Gastrocnemius medialis (tissue), 4 donors: ENCODE measurements at regions of chr17 and their contacts with region 1.

Region 1: DNA sequence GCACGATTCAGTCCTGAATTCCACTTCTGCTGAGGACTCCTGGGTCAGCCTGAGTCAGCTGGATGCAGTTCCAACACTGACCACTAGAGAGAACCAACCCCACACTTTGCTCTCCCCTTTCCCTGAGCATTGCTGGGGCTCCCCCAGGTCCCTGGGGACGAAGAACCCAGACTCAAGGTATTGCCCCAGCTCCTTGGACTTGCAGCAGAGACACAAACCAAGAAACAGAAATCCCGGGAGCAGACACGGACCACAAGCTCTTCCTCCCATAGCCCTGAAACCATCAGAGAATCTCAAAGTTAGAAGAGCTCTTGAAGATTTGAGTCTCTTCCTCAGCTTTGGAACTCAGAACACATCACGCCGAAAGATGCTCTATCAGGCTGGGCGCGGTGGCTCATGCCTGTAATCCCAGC is 678 bp upstream of the GH1 start:
- DNase-seq: peak in 1 of 2 donors; percentile 61
- ATAC-seq: peak; percentile 87 to 93
- H3K4me3 ChIP-seq: no peak overlapping the region
- H3K27ac ChIP-seq: no peak overlapping the region
- H3K4me1 ChIP-seq: peaks cover 3 to 4% of the 10 kb centered on the region in 2 donors
- H3K27me3 ChIP-seq: no peaks in the 10 kb centered on the region
- CTCF ChIP-seq: peak; percentile 90 to 99 (median 97)
- POLR2A ChIP-seq: no peak

Region 2: DNA sequence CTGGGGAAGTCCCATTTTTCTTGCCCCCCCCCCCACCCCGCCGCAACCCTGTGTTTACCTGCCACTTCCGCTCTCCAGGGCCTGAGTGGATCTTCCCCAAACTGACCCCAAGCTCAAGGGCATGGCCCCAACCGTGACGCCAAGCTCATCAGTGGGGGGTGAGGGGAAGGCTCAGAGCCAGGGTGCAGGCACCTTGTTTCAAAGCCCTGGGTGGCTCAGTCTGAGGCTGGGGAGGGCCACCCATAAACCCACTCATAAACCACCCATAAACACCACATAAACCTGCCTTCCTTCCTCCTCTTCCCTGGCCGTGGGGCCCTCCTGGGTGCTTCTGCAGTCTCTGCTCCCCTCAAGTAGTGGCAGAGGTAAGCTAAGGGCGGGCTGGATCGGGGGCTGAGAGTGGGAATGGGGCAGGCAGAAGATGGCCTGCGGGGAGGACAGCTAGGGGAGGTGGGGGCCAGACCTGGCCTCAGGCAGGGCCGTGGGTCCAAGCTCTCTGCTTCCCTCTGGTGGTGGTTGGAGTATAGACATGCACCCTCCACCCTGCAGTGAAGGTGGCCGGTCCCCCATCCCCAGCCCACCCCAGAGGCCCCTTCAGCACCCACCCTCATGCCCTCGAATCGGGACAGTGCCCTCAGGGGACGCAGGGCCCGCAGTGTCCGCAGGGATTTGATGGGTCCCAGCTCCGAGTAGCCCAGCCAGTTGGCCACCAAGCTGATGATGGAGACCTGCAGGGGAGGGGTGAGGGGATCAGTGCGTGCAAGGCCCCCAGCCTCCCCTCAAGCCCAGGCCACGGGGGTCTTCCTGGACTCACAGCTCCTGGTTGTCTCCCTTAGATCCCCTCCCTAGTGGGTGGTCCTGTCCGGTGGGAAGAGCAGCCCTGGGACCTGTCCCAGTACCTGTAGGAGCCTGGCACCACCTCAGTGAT is 27.4 kb after region 1 on chr17:
- in situ Hi-C with region 1: no loop called
- intact Hi-C with region 1: loop called (anchors 2 kb)
- DNase-seq: no peak
- ATAC-seq: peak; percentile 34 to 47
- H3K4me3 ChIP-seq: no peak overlapping the region
- H3K27ac ChIP-seq: peak overlapping the region; percentile 78 to 99 (median 88)
- H3K4me1 ChIP-seq: peaks cover 45 to 49% of the 10 kb centered on the region in 2 donors
- H3K27me3 ChIP-seq: no peaks in the 10 kb centered on the region
- CTCF ChIP-seq: peak; percentile 60 to 84 (median 79)
- POLR2A ChIP-seq: no peak

Region 3: DNA sequence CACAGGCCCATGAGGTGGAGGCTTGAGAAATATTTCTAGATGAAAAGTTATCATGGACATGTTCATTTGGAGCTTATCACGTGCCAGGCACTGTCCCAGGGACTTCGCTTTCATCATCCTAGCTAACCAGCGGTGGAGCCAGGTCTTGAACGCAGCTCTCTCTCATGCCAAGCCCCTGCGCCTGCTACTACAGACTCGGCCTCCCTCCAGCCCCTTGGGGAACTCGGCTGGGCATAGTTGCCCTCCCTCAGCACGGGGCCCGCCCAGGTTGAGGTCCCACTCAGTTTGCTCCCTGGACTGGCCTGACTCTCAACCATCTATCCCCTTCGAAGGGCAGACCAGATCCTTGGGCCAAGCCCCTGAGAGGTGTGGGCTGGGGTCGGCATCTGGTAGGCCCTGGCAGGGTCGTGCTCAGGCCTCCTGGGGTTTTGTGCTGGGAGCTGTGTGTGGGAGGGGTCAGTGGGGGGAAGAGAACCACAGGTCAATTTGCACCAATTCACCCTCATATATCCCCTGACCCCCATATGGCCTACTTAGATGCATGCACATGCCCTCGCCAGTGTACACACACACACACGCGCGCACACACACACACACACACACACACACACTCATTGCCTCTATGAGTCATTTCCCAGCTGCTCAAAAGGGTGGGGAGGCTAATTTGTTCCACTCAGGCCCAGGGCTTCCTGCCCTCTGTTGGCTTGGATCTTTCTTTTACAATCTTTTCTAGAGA is 65.5 kb after region 1 on chr17:
- in situ Hi-C with region 1: no loop called
- intact Hi-C with region 1: loop called (anchors 1 kb)
- DNase-seq: peak; percentile 84 to 94
- ATAC-seq: peak; percentile 54 to 55
- H3K4me3 ChIP-seq: peak overlapping the region in 2 of 4 donors; percentile 4 to 23
- H3K27ac ChIP-seq: peak overlapping the region; percentile 98 to 100 (median 99)
- H3K4me1 ChIP-seq: peaks cover 75 to 76% of the 10 kb centered on the region in 2 donors
- H3K27me3 ChIP-seq: no peaks in the 10 kb centered on the region
- CTCF ChIP-seq: peak in 1 of 5 experiments; percentile 3
- POLR2A ChIP-seq: peak; percentile 36 to 44

Region 4: GRCh38 chr17:64025732-64026294 is 106.5 kb after region 1 on chr17:
- in situ Hi-C with region 1: loop called in 3 of 4 experiments (anchors 5 to 10 kb)
- intact Hi-C with region 1: no loop called
- DNase-seq: peak; percentile 46 to 72
- ATAC-seq: peak; percentile 65 to 74
- H3K4me3 ChIP-seq: peak overlapping the region; percentile 0 to 33 (median 18)
- H3K27ac ChIP-seq: peak overlapping the region in 3 of 4 donors; percentile 50 to 82 (median 66)
- H3K4me1 ChIP-seq: peaks cover 9 to 11% of the 10 kb centered on the region in 2 donors
- H3K27me3 ChIP-seq: no peaks in the 10 kb centered on the region
- CTCF ChIP-seq: peak; percentile 84 to 98 (median 95)
- POLR2A ChIP-seq: no peak

Region 5: GRCh38 chr17:64081802-64082799 is 162.8 kb after region 1 on chr17:
- in situ Hi-C with region 1: no loop called
- intact Hi-C with region 1: no loop called
- DNase-seq: no peak
- ATAC-seq: peak in 1 of 2 donors; percentile 54
- H3K4me3 ChIP-seq: no peak overlapping the region
- H3K27ac ChIP-seq: no peak overlapping the region
- H3K4me1 ChIP-seq: peaks cover 11 to 15% of the 10 kb centered on the region in 2 donors
- H3K27me3 ChIP-seq: no peaks in the 10 kb centered on the region
- CTCF ChIP-seq: no peak
- POLR2A ChIP-seq: no peak

Region 6: DNA sequence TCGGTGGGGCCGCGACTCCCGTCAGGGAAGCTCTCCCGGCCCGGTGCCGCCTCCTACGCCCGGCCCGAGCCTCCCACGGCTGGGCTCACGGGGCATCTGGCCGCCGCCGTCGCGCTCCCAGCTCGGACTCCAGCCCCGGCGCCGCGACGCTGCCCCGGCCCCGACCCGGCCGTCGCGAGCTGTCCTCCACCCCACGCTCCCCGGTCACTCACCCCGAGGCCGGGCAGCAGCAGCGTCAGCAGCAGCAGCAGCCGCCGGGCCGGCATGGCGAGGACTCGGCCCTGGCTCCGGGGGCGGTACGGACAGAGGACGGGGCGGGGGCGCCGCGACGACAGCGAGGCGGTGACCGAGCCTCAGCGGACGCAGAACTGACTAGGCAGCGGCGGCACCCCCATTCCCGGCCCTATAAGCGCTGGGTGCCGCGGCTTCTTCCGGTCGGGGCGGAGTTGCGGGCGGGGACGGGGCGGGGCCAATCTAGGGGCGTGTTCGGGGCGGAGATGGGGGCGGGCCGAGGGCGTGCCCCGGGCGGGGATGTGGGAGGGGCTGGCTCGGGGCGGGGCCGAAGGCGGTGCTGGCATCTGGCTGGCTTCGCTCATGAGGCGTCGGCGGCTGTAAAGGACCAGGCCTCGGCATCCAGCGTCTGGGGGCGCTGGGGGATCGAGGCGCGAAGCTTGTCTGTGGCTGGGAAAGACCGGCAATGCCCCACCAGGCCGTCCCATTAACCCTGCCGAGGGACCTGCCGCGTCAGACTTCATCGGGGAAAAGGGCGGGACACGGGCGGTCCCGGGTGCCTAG is 210.6 kb after region 1 on chr17 and contains the start of gene ERN1:
- in situ Hi-C with region 1: loop called in 3 of 4 experiments (anchors 10 to 25 kb)
- intact Hi-C with region 1: loop called (anchors 5 kb)
- DNase-seq: peak; percentile 87 to 93
- ATAC-seq: peak; percentile 85 to 88
- H3K4me3 ChIP-seq: peak within 1 kb of the TSS; percentile 60 to 85 (median 78)
- H3K27ac ChIP-seq: peak within 1 kb of the TSS; percentile 88 to 95 (median 92)
- H3K4me1 ChIP-seq: peaks cover 17 to 21% of the 10 kb centered on the region in 2 donors
- H3K27me3 ChIP-seq: no peaks in the 10 kb centered on the region
- CTCF ChIP-seq: peak in 2 of 5 experiments; percentile 3 to 15
- POLR2A ChIP-seq: peak; percentile 89 to 94
- total RNA-seq, gene ERN1: 9.7 to 27.5 (median 13.8) TPM

Region 7: GRCh38 chr17:64281962-64282727 is 362.8 kb after region 1 on chr17:
- in situ Hi-C with region 1: loop called (anchors 10 to 25 kb)
- intact Hi-C with region 1: loop called (anchors 10 kb)
- DNase-seq: peak; percentile 35 to 45
- ATAC-seq: peak; percentile 35 to 41
- H3K4me3 ChIP-seq: peak overlapping the region; percentile 14 to 47 (median 36)
- H3K27ac ChIP-seq: peak overlapping the region; percentile 51 to 71 (median 59)
- H3K4me1 ChIP-seq: peaks cover 23 to 28% of the 10 kb centered on the region in 2 donors
- H3K27me3 ChIP-seq: no peaks in the 10 kb centered on the region
- CTCF ChIP-seq: peak; percentile 72 to 89 (median 85)
- POLR2A ChIP-seq: no peak

Region 8: GRCh38 chr17:64448665-64449512 is 529.6 kb after region 1 on chr17 and contains the start of gene MILR1:
- in situ Hi-C with region 1: loop called in 1 of 4 experiments (anchors 25 kb)
- intact Hi-C with region 1: no loop called
- DNase-seq: peak in 1 of 2 donors; percentile 24
- ATAC-seq: peak; percentile 60 to 62
- H3K4me3 ChIP-seq: no peak within 1 kb of the TSS
- H3K27ac ChIP-seq: peak within 1 kb of the TSS in 3 of 4 donors; percentile 16 to 44 (median 23)
- H3K4me1 ChIP-seq: no peaks in the 10 kb centered on the region
- H3K27me3 ChIP-seq: no peaks in the 10 kb centered on the region
- CTCF ChIP-seq: no peak
- POLR2A ChIP-seq: no peak
- total RNA-seq, gene MILR1: 0.76 to 3.3 (median 2.2) TPM in 3 of 4 donors, not detected in the other